RWPE1 (cell line): ENCODE measurements at regions of chr15 and their contacts with region 1.

Region 1: GRCh38 chr15:99704444-99704838 is 28.8 kb downstream of the LYSMD4 start:
- DNase-seq: peak; percentile 65
- H3K27ac ChIP-seq: no peak overlapping the region
- CTCF ChIP-seq: peak; percentile 72

Region 2: DNA sequence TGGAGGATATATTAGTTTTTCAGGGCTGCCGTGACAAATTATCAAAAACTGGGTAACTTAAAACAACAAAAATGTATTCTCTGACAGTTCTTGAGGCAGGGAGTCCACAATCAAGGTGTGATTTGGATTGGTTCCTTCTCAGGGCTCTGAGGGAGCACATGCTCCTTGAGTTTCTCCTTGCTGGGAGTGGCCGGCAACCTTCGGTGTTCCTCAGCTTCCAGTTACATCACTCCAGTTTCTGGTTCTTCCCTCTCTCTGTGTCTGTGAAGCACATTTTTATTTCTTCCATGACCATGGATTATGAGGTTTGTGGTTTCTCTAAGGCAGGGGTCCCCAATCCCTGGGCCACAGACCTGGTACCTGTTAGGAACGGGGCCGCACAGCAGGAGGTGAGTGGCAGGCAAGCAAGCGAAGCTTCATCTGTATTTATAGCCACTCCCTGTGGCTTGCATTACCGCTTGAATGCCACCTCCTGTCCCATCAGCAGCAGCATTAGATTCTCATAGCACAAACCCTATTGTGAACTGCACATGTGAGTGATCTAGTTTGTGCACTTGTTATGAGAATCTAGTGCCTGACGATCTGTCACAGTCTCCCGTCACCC is 428.8 kb before region 1 on chr15:
- CTCF ChIA-PET with region 1: interaction called, 18 read pairs
- POLR2A ChIA-PET with region 1: no interaction called
- DNase-seq: no peak
- H3K27ac ChIP-seq: no peak overlapping the region
- CTCF ChIP-seq: no peak

Region 3: DNA sequence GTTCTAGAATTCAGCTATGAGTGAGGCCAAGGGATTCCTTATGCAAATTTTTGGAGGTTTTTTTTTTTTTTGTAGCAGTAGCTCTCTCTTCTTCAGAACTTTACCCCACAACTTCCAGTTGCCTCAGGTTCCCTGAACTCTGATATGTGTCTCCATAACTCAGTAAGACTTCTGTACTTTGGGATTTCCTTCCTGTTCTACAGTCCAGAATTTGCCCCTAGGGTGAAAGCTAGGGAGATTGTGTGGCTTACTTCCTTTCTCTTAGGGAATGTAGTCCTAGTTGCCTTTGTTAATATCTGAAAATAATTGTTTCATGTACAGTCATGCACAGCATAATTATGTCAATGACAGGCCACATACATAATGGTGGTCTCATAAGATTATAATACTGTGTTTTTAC is 422.3 kb before region 1 on chr15:
- CTCF ChIA-PET with region 1: interaction called, 17 read pairs
- POLR2A ChIA-PET with region 1: no interaction called
- DNase-seq: no peak
- H3K27ac ChIP-seq: no peak overlapping the region
- CTCF ChIP-seq: no peak

Region 4: GRCh38 chr15:99409097-99409473 is 295.4 kb before region 1 on chr15:
- CTCF ChIA-PET with region 1: interaction called, 28 read pairs
- POLR2A ChIA-PET with region 1: no interaction called
- DNase-seq: peak; percentile 82
- H3K27ac ChIP-seq: peak overlapping the region; percentile 83
- CTCF ChIP-seq: peak; percentile 79

Region 5: GRCh38 chr15:99682455-99682854 is 22.0 kb before region 1 on chr15:
- CTCF ChIA-PET with region 1: no interaction called
- POLR2A ChIA-PET with region 1: no interaction called
- DNase-seq: peak; percentile 51
- H3K27ac ChIP-seq: no peak overlapping the region
- CTCF ChIP-seq: no peak

Region 6: DNA sequence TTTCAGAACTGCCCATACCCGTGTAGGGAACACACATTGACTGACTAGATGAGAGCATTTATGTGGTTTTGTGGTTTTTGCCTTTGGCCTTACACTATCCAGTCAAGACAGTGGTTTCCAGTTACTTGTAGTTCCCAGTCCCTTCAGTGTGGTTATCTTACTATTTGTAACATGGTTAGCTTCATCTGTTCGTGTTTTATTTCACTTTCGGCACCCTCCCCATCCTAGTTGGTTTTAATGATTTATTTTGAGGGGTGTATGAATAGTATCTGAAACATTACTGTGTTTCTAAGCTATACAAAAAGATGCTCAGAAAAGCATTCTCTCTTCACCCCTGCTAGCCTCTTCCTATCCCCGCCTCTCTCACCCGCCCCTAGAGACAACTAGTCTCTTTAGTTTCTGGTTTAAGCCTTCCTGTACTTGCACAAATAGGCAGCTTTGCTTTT is 14.7 kb after region 1 on chr15:
- CTCF ChIA-PET with region 1: interaction called, 11 read pairs
- POLR2A ChIA-PET with region 1: no interaction called
- DNase-seq: no peak
- H3K27ac ChIP-seq: no peak overlapping the region
- CTCF ChIP-seq: no peak